Gastrocnemius medialis (tissue), 4 donors: ENCODE measurements at regions of chr6 and their contacts with region 1.

Region 1: DNA sequence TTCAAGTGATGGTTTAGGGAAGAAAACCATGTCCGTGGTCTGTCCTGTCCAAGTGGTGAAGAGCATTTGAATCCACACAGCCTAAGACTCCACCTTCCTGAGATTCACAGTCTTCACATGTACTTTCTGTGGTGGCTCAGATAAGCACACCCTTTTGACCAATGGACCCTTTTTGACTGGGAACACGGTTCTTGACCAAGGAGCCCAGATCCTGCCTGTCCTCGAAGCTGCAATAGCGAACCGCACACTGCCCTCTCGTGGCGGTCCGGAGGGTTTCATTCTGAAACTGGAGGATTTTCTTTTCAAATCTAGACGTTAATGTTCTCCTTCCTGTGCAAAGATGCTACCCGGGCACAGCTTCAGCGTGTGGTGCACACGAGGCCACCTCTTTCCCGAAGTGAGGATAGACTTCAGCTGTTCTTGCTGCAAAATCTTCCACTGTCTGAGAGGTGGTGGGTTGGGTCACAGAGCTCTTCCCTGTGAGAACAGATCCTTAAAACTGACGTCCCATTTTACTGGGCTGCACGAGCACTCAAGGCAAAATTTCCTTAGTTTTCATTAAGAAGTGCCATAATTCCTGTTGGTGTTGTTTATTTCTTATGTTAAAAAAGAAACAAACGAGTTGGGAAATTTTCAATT is 90.5 kb downstream of the SYNJ2 start:
- DNase-seq: peak; percentile 39 to 55
- ATAC-seq: peak; percentile 56 to 77
- H3K4me3 ChIP-seq: no peak overlapping the region
- H3K27ac ChIP-seq: no peak overlapping the region
- H3K4me1 ChIP-seq: peaks cover 0 to 5% of the 10 kb centered on the region in 2 donors
- H3K27me3 ChIP-seq: no peaks in the 10 kb centered on the region
- CTCF ChIP-seq: peak; percentile 65 to 88 (median 85)
- POLR2A ChIP-seq: no peak

Region 2: GRCh38 chr6:157756708-157757429 is 315.3 kb before region 1 on chr6:
- in situ Hi-C with region 1: no loop called
- intact Hi-C with region 1: loop called (anchors 1 kb)
- DNase-seq: peak; percentile 56 to 72
- ATAC-seq: peak; percentile 87 to 91
- H3K4me3 ChIP-seq: peak overlapping the region in 1 of 4 donors; percentile 12
- H3K27ac ChIP-seq: peak overlapping the region in 1 of 4 donors; percentile 18
- H3K4me1 ChIP-seq: peaks cover 0 to 10% of the 10 kb centered on the region in 2 donors
- H3K27me3 ChIP-seq: no peaks in the 10 kb centered on the region
- CTCF ChIP-seq: peak; percentile 74 to 84 (median 81)
- POLR2A ChIP-seq: no peak

Region 3: GRCh38 chr6:157974341-157974894 is 97.8 kb before region 1 on chr6:
- in situ Hi-C with region 1: loop called in 1 of 4 experiments (anchors 10 kb)
- intact Hi-C with region 1: no loop called
- DNase-seq: no peak
- ATAC-seq: no peak
- H3K4me3 ChIP-seq: no peak overlapping the region
- H3K27ac ChIP-seq: no peak overlapping the region
- H3K4me1 ChIP-seq: no peaks in the 10 kb centered on the region
- H3K27me3 ChIP-seq: no peaks in the 10 kb centered on the region
- CTCF ChIP-seq: no peak
- POLR2A ChIP-seq: no peak

Region 4: DNA sequence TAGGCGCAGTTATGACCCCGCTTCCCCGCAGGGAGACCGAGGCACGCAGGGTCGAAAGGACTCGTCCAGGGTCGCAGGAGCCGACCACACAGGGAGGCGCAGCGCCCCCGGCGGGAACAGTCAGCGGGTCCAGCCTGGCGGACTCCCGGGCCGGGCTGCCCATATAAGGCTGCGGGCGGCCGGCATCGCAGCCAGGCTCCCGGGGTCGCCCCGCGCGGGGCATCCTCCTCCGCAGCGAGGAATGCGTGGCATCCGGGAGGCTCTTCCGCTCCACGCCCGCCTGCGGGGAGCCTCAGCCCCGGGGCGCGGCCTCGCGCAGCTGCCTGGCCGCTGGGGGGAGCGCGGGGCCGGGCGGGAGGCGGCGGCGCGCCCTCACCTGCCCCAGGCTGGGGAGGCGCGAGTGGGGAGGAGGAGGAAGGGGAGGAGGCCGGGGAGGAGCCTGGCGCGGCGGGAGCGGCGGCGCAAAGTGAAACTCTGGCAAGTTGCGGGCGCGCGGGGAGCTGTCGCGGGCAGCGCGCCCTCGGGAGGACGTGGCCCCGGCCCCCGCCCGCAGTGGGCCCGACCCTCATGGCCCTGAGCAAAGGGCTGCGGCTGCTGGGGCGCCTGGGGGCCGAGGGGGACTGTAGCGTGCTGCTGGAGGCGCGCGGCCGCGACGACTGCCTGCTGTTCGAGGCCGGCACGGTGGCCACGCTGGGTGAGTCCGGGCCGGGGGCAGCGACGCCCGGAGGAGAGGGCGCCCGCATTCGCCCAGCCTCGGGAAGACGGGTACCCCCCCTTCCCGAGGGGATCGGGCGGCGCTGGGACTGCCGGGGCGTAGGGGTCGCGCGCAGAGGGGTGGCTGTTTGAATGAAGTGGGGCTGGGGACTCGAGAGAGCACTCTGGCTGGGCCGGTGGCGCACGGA is 90.6 kb before region 1 on chr6 and contains the start of gene SYNJ2:
- in situ Hi-C with region 1: loop called (anchors 5 to 10 kb)
- intact Hi-C with region 1: loop called (anchors 1 kb)
- DNase-seq: peak; percentile 44 to 60
- ATAC-seq: peak; percentile 88 to 90
- H3K4me3 ChIP-seq: peak within 1 kb of the TSS; percentile 71 to 93 (median 88)
- H3K27ac ChIP-seq: peak within 1 kb of the TSS; percentile 54 to 78 (median 66)
- H3K4me1 ChIP-seq: peaks cover 0 to 7% of the 10 kb centered on the region in 2 donors
- H3K27me3 ChIP-seq: no peaks in the 10 kb centered on the region
- CTCF ChIP-seq: peak in 4 of 5 experiments; percentile 43 to 72 (median 68)
- POLR2A ChIP-seq: peak; percentile 46 to 71
- total RNA-seq, gene SYNJ2: 3.9 to 17.0 (median 7.0) TPM

Region 5: DNA sequence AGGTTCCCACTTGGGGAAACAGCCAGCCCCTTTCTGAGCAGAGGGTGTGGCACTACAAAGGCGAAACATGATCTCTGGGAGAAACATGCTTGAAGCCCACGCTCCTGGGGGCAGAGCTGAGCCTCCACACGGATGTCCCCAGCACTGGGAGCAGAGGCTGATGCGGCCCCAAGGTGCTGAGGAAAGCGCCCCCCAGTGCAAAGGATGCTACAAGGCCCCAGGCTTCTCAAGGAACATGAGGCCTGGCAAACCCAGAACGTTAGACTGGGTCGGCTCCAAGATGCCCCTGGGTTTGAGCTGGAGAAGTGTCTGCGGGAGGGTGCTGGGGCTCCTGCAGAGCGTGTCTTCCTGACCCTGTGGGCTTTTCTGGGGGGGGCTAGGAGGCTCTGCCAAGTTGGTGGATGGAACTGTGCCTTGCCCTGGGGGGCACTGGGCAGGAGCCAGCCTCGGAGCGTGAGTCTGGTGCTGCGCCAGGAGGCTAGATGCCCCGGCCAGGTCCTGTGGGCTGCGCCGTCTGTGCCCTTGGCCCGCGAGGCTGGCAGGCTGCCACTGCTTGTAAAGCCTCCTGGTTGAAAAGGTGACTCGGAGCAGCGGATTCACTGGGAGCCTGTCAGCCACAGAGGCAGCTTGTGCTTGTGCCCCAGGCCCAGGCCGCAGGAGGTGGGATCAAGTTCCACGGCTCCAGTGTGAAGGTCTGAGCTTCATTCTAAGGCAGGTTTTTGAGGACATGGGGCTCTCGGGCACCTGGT is 82.5 kb before region 1 on chr6:
- in situ Hi-C with region 1: loop called in 3 of 4 experiments (anchors 5 to 10 kb)
- intact Hi-C with region 1: no loop called
- DNase-seq: peak; percentile 33 to 63
- ATAC-seq: peak; percentile 59 to 73
- H3K4me3 ChIP-seq: no peak overlapping the region
- H3K27ac ChIP-seq: peak overlapping the region; percentile 32 to 64 (median 62)
- H3K4me1 ChIP-seq: peaks cover 28 to 29% of the 10 kb centered on the region in 2 donors
- H3K27me3 ChIP-seq: no peaks in the 10 kb centered on the region
- CTCF ChIP-seq: no peak
- POLR2A ChIP-seq: no peak